ENCODE measurements at regions of chr19 and their contacts with region 1.

Region 1: DNA sequence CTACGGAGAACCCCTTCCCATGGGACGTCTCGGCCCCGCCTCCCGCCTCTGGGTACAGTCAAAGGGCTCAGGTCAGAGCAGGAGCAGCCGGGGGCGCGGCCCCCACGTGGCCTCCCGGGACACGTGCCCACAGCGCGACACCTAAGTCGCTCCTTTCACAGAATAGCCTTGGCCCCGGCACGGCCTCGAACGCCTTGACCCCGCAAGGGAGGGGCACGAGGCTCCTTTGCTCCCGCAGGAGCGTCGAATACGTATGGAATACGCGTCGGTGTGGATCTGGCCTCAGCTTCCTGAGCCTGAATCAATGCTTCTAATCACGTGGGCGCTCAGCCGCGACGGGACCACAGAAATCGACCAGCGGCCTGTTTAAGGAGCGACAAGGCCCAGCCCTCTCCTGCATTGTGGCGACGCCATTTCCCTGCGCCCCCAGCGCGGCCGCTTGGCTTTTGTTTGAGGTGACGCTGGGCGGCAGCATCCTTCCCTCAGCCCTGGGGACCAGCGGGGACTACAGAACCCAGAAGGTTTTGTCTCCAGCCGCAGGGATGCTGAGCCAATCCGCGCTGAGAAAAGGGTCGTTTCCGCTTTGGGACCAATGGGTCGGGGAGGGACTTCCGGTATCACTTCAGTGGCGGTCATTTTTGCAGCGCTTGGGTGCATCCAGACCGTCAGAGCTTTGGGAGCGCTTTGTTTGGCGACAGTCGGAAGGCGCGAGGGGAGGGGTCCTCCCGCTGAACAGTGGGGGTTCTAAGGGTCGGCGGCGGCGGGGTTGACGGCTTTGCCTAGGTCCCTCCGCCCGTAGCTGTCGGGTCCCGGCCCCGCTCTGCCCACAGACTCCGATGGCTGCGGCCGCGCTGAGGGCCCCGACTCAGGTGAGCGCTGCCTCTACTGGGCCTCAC is at the start of gene ZIK1:
- DNase-seq: peak; percentile 96
- ATAC-seq: peak; percentile 89
- H3K4me3 ChIP-seq: peak within 1 kb of the TSS; percentile 70 to 92 (median 77)
- H3K4me3 Mint-ChIP-seq: peak within 1 kb of the TSS; percentile 99
- H3K27ac ChIP-seq: peak within 1 kb of the TSS; percentile 86 to 88
- H3K27ac Mint-ChIP-seq: peak within 1 kb of the TSS; percentile 96
- H3K4me1 ChIP-seq: peaks cover 20 to 27% of the 10 kb centered on the region in 2 donors
- H3K4me1 Mint-ChIP-seq: peaks cover 21% of the 10 kb centered on the region
- H3K27me3 ChIP-seq: no peaks in the 10 kb centered on the region
- H3K27me3 Mint-ChIP-seq: no peaks in the 10 kb centered on the region
- CTCF ChIP-seq: no peak
- total RNA-seq, gene ZIK1: 19.2 and 21.8 TPM in 2 replicates

Region 2: DNA sequence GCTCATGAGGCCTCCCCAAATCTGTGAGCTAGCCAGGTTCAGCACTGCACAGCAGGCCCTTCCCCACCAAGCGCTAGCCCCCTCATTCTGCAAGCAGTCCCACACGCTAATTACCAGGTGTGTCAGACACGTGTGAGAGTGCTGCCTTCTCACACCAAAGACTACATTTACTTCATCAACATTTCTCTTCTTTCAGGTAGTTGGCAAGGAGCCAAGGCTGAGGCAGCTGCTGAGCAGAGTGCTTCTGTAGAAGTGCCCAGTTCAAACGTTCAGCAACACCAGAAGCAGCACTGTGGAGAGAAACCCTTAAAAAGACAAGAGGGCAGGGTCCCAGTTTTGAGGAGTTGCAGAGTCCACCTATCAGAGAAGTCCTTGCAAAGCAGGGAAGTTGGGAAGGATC is 77.6 kb before region 1 on chr19:
- CTCF ChIA-PET with region 1: no interaction called
- POLR2A ChIA-PET with region 1: no interaction called
- intact Hi-C with region 1: no loop called
- DNase-seq: no peak
- ATAC-seq: no peak
- H3K4me3 ChIP-seq: no peak overlapping the region
- H3K4me3 Mint-ChIP-seq: no peak overlapping the region
- H3K27ac ChIP-seq: no peak overlapping the region
- H3K27ac Mint-ChIP-seq: no peak overlapping the region
- H3K4me1 ChIP-seq: peaks cover 0 to under 1% of the 10 kb centered on the region in 2 donors
- H3K4me1 Mint-ChIP-seq: peaks cover 10% of the 10 kb centered on the region
- H3K27me3 ChIP-seq: no peaks in the 10 kb centered on the region
- H3K27me3 Mint-ChIP-seq: no peaks in the 10 kb centered on the region
- CTCF ChIP-seq: no peak

Region 3: GRCh38 chr19:57613941-57614743 is 30.4 kb after region 1 on chr19 and contains the start of gene ZNF134:
- CTCF ChIA-PET with region 1: no interaction called
- POLR2A ChIA-PET with region 1: interaction called, 8 read pairs
- intact Hi-C with region 1: loop called (anchors 1 kb)
- DNase-seq: peak; percentile 94
- ATAC-seq: peak; percentile 99
- H3K4me3 ChIP-seq: peak within 1 kb of the TSS; percentile 45 to 97 (median 92)
- H3K4me3 Mint-ChIP-seq: peak within 1 kb of the TSS; percentile 93
- H3K27ac ChIP-seq: peak within 1 kb of the TSS; percentile 42 to 81
- H3K27ac Mint-ChIP-seq: peak within 1 kb of the TSS; percentile 90
- H3K4me1 ChIP-seq: peaks cover 14 to 21% of the 10 kb centered on the region in 2 donors
- H3K4me1 Mint-ChIP-seq: peaks cover 40% of the 10 kb centered on the region
- H3K27me3 ChIP-seq: no peaks in the 10 kb centered on the region
- H3K27me3 Mint-ChIP-seq: no peaks in the 10 kb centered on the region
- CTCF ChIP-seq: peak; percentile 34
- total RNA-seq, gene ZNF134: 38.1 and 38.9 TPM in 2 replicates

Region 4: DNA sequence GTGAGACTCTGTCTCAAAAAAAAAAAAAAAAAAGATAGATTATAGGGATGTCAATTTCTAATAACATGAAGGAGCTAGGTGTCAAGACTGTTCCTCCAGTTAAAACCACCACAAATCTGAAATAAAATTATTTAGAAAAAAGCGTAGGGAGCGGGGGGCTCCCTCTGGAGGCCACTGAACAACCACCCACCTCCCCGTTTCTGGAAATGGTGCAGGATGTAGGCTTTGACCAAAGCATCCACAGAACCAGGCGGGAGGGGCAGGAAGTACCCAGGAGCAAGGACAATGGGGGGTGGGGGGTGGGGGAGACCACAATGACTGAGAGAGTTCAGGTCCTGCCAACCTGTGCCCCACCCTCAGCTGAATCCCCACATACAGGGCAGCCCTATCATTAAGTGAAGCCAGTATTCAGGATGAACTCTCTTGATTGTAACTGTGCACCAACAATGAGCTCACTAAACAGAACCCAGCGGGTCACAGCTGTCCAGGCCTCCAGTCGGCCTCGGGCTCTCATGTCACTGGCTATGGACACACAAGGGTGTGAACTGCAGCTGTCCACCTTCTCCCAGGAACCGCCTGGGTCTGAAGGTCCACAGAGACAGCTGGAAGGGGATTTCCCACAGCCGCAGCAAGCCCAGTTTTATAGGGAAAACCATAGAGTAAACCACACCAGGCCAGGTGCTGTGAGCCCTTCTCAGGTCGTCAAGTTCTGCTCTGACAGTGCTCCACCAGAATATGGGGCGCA is 507.7 kb after region 1 on chr19:
- CTCF ChIA-PET with region 1: no interaction called
- POLR2A ChIA-PET with region 1: no interaction called
- intact Hi-C with region 1: no loop called
- DNase-seq: no peak
- ATAC-seq: no peak
- H3K4me3 ChIP-seq: no peak overlapping the region
- H3K4me3 Mint-ChIP-seq: no peak overlapping the region
- H3K27ac ChIP-seq: no peak overlapping the region
- H3K27ac Mint-ChIP-seq: no peak overlapping the region
- H3K4me1 ChIP-seq: no peaks in the 10 kb centered on the region
- H3K4me1 Mint-ChIP-seq: peaks cover 2% of the 10 kb centered on the region
- H3K27me3 ChIP-seq: no peaks in the 10 kb centered on the region
- H3K27me3 Mint-ChIP-seq: no peaks in the 10 kb centered on the region
- CTCF ChIP-seq: no peak